Mammary epithelial cell (primary cell): ENCODE measurements at regions of chr15 and their contacts with region 1.

Region 1: DNA sequence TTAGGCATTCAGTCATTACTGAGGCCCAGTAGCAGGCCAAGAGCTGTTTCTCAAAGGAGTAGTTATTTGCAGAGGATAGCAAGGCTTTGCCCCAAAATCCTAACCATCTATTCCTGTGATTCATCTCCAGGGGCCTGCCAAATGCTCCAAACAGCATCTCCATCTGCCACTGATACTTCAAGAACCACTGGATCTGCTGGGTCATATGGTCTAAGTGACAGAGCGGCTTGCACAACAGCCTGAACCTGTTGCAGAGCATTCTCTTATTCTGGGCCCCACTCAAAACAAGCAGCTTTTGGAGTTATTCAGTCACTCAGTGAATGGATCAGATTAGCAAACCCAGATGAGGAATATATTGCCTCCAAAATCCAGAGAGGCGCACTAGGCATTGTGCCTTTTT is 68.8 kb upstream of the ALDH1A3 start:
- DNase-seq: no peak
- H3K4me3 ChIP-seq: no peak overlapping the region
- H3K27ac ChIP-seq: no peak overlapping the region
- H3K4me1 ChIP-seq: peaks cover 23% of the 10 kb centered on the region
- H3K27me3 ChIP-seq: no peaks in the 10 kb centered on the region
- CTCF ChIP-seq: no peak

Region 2: DNA sequence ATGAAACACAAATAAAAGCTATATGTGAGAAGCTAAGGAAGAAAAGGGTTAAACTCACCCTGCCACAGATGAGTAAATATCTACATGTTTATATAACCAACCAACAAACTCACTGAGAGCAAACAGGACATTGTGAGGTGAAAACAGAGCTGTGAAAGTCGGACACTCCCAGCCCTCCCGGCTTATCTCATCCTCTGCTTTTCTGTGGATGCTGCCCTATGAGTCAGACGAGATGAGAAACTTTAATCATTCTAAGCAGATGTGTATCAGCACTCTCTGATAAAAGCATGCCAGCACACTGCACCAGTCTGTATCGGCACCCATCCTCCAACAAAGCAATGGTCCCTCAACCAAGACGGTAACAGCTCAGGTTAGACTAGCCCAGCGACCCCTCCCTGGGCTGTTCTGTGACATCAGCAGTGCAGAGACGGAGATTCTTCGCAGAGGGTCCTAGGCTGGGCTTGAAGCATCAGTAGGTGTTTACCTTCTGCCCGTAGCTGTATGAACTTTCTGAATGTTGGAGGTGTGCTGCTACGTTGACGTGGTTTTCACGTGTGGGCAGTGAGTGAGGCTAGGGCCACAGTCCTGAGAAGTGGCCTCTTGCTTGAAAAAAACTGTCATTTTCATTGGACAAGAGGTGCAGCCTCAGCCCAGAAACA is 51.0 kb before region 1 on chr15:
- CTCF ChIA-PET with region 1: no interaction called
- dilution Hi-C with region 1: loop called (anchors 5 kb)
- in situ Hi-C with region 1: no loop called
- intact Hi-C with region 1: no loop called
- DNase-seq: peak; percentile 76
- H3K4me3 ChIP-seq: no peak overlapping the region
- H3K27ac ChIP-seq: no peak overlapping the region
- H3K4me1 ChIP-seq: peaks cover 7% of the 10 kb centered on the region
- H3K27me3 ChIP-seq: no peaks in the 10 kb centered on the region
- CTCF ChIP-seq: no peak

Region 3: DNA sequence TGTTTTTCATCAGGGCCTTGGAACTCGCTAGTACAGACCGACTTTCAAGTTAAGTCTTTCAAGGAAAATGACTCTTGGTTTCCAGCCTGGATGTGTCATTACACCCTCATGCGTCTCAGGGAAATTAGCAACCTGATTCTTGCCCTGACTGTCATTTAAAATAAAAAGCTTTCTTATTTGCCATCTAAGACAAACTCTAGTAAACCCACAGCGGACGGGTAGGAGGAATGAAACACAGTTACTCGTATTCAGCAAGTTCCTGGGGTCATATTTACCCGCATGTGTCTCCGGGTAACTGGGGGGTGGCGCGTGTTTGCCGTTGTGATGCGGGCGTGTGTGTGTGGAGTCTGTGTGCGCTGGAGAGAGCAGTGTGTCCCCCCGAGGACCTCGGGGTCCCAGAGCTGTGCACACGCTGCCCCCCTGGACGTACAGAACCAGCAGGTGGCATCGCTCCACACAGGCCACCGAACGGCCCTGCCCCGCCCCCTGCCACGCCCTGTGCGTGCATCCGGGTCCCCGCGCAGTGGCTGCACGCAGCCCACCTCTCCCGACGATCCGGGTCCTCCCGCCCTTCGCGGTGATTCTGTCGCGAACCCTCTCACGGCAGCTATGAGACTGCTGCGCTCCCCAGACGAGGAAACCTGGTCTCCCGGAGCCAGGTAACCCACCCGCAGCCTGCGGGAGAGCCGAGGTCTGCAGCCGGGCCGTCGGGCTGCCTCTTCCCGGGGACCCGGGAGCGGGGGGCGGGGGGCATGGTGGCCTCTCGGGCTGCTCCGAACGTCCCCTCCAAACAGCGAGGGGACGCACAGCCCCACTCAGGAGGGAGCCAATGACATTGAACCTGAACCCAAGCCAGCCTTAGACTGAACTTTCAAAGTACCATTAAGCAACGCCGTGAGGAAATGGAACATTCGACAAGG is 38.7 kb after region 1 on chr15:
- CTCF ChIA-PET with region 1: no interaction called
- dilution Hi-C with region 1: no loop called
- in situ Hi-C with region 1: no loop called
- intact Hi-C with region 1: no loop called
- DNase-seq: peak; percentile 33
- H3K4me3 ChIP-seq: peak overlapping the region; percentile 60 to 69 (median 63)
- H3K27ac ChIP-seq: peak overlapping the region; percentile 11
- H3K4me1 ChIP-seq: peaks cover 8% of the 10 kb centered on the region
- H3K27me3 ChIP-seq: no peaks in the 10 kb centered on the region
- CTCF ChIP-seq: peak; percentile 15 to 64